ENCODE measurements at regions of chr5 and their contacts with region 1.

Region 1: GRCh38 chr5:142713121-142713706 is 27.3 kb upstream of the FGF1 start:
- DNase-seq: peak; percentile 85
- H3K4me3 ChIP-seq: peak overlapping the region; percentile 61 to 90
- H3K27ac ChIP-seq: peak overlapping the region; percentile 76 to 80
- H3K4me1 ChIP-seq: peaks cover 5 to 26% of the 10 kb centered on the region in 2 experiments; a peak in 3 of 4 replicates
- H3K27me3 ChIP-seq: no peaks in the 10 kb centered on the region
- CTCF ChIP-seq: peak; percentile 98
- EP300 ChIP-seq: no peak
- RAD21 ChIP-seq: peak; percentile 58

Region 2: GRCh38 chr5:142605611-142606010 is 107.6 kb before region 1 on chr5:
- CTCF ChIA-PET with region 1: interaction called, 30 read pairs
- POLR2A ChIA-PET with region 1: no interaction called
- DNase-seq: no peak
- H3K4me3 ChIP-seq: no peak overlapping the region
- H3K27ac ChIP-seq: no peak overlapping the region
- H3K4me1 ChIP-seq: peaks cover 0 to 1% of the 10 kb centered on the region in 2 experiments; a peak in 1 of 4 replicates
- H3K27me3 ChIP-seq: no peaks in the 10 kb centered on the region
- CTCF ChIP-seq: no peak
- EP300 ChIP-seq: no peak
- RAD21 ChIP-seq: no peak

Region 3: DNA sequence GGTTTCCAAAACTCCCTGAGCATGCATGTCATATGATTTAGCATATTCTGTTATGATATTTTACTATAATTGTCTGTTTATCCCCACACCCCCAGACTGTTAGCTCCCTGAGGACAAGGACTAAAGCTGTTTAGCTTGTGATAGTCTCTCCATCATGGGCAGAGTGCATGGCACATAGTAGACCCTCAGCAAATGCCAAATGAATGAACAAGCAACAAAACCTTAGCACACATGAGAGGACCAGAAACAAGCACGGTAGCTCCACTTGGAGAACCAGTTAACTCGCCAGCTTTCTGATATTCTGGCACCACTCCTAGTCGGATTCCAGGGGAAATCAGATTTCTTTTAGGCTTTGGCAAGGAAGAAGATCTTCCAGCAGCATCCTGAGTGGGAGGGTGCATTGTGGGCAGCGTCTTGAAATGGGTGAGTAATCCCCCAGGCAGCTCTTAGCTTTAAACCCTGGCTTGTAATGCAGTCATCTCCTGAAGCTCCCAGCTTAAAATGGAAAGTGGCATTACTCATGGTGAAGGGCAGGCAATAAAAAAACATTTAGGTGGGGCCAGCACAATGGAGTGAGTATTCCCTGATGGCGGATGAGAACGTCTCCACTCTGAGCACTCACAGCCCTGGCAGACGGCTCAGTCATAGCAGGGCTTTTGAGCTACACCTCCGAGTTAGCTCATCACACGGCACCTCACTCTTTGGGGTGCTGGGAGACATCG is 68.4 kb before region 1 on chr5:
- CTCF ChIA-PET with region 1: interaction called, 668 read pairs
- POLR2A ChIA-PET with region 1: no interaction called
- DNase-seq: no peak
- H3K4me3 ChIP-seq: peak overlapping the region in 1 of 2 experiments; percentile 12; a peak in 1 of 4 replicates
- H3K27ac ChIP-seq: peak overlapping the region; percentile 64 to 92
- H3K4me1 ChIP-seq: peaks cover 8 to 36% of the 10 kb centered on the region in 2 experiments
- H3K27me3 ChIP-seq: no peaks in the 10 kb centered on the region
- CTCF ChIP-seq: no peak
- EP300 ChIP-seq: peak in 1 of 2 experiments; percentile 88; a peak in 2 of 4 replicates
- RAD21 ChIP-seq: no peak

Region 4: GRCh38 chr5:142674531-142675469 is 38.4 kb before region 1 on chr5:
- CTCF ChIA-PET with region 1: interaction called, 16 read pairs
- POLR2A ChIA-PET with region 1: no interaction called
- DNase-seq: no peak
- H3K4me3 ChIP-seq: no peak overlapping the region
- H3K27ac ChIP-seq: peak overlapping the region in 1 of 2 experiments; percentile 80; a peak in 2 of 4 replicates
- H3K4me1 ChIP-seq: peaks cover 0 to 19% of the 10 kb centered on the region in 2 experiments; a peak in 2 of 4 replicates
- H3K27me3 ChIP-seq: no peaks in the 10 kb centered on the region
- CTCF ChIP-seq: no peak
- EP300 ChIP-seq: no peak
- RAD21 ChIP-seq: no peak

Region 5: GRCh38 chr5:142758056-142758795 is 45.0 kb after region 1 on chr5:
- CTCF ChIA-PET with region 1: interaction called, 472 read pairs
- POLR2A ChIA-PET with region 1: no interaction called
- DNase-seq: no peak
- H3K4me3 ChIP-seq: no peak overlapping the region
- H3K27ac ChIP-seq: no peak overlapping the region
- H3K4me1 ChIP-seq: peaks cover 5 to 9% of the 10 kb centered on the region in 2 experiments; a peak in 2 of 4 replicates
- H3K27me3 ChIP-seq: no peaks in the 10 kb centered on the region
- CTCF ChIP-seq: no peak
- EP300 ChIP-seq: no peak
- RAD21 ChIP-seq: no peak

Region 6: DNA sequence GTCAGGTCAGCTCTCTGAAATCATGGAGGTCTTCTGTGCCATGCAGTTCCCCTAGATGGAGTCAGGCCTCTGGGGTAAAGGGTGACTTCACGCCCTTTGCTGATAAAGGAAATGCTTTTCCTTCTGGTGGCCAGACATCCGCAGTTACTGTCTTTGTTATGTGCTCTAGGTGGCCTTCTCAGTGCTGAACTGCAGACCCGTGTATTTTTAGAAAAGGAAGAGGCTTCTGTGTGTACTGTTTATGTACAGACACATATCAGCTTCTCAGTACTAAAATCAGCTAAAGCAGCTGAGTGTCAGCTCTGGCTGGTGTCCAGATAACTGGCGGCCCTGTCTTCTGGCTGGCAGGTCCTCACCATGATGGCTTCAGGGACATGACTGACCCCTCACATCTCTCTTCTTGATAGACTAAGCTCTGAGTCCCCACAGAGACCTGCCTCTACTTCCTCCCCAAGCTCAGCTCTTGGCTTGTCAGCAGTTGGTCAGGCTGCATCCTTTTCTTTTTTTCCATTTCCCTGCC is 132.2 kb after region 1 on chr5:
- CTCF ChIA-PET with region 1: interaction called, 25 read pairs
- POLR2A ChIA-PET with region 1: no interaction called
- DNase-seq: peak; percentile 45
- H3K4me3 ChIP-seq: no peak overlapping the region
- H3K27ac ChIP-seq: peak overlapping the region in 1 of 2 experiments; percentile 93; a peak in 2 of 4 replicates
- H3K4me1 ChIP-seq: peaks cover 9 to 49% of the 10 kb centered on the region in 2 experiments
- H3K27me3 ChIP-seq: no peaks in the 10 kb centered on the region
- CTCF ChIP-seq: no peak
- EP300 ChIP-seq: peak in 1 of 2 experiments; percentile 6; a peak in 1 of 4 replicates
- RAD21 ChIP-seq: peak; percentile 27; the same call in 1 of the 2 replicates

Region 7: DNA sequence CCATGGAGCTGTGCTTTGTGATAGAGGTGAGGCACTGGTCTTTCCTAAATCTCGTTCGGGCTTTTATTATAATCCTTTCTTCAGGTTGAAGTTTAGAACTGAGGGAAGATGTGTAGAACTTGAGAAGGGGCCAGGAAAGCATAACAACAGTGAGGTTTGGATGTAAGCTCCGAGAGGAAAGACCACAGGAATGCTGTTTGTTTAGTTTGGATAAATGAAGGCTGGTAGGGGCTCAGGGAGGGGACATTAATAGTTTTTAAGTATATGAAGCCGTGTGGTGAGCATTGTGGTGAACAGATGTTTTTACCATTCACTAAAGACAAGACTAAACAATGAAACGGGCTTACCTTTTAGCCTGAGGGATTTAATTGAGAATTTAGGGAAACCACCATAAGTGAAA is 187.7 kb after region 1 on chr5:
- CTCF ChIA-PET with region 1: interaction called, 32 read pairs
- POLR2A ChIA-PET with region 1: no interaction called
- DNase-seq: no peak
- H3K4me3 ChIP-seq: no peak overlapping the region
- H3K27ac ChIP-seq: no peak overlapping the region
- H3K4me1 ChIP-seq: peaks cover 3 to 8% of the 10 kb centered on the region in 2 experiments; a peak in 2 of 4 replicates
- H3K27me3 ChIP-seq: no peaks in the 10 kb centered on the region
- CTCF ChIP-seq: no peak
- EP300 ChIP-seq: no peak
- RAD21 ChIP-seq: no peak